ENCODE measurements at regions of chr3 and their contacts with region 1.

Region 1: DNA sequence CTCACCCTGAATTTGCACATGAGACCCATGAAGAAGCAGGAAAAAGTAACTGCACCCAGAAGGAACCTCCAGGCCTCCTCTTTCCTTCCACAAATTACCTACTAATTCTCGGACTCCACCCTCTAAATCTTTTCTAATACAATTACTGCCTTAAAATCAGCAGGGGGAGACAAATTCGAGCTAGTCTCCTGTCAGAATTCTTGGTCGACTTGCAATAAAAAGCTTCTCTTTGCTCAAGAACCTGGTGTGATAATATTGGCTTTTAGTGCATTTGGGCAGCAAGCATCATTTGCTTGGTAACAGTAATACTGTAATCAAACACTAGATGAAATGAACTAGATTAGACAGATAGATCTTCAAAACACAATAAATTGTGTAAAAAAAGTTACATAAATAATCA is 281.9 kb downstream of the RAP2B start:
- DNase-seq: peak; percentile 5
- ATAC-seq: no peak
- H3K4me3 ChIP-seq: no peak overlapping the region
- H3K27ac ChIP-seq: no peak overlapping the region
- H3K4me1 ChIP-seq: no peaks in the 10 kb centered on the region
- H3K27me3 ChIP-seq: no peaks in the 10 kb centered on the region
- CTCF ChIP-seq: peak; percentile 25
- EP300 ChIP-seq: no peak
- POLR2A ChIP-seq: no peak
- RAD21 ChIP-seq: no peak

Region 2: GRCh38 chr3:153026026-153026425 is 417.9 kb before region 1 on chr3:
- CTCF ChIA-PET with region 1: interaction called, 4 read pairs
- POLR2A ChIA-PET with region 1: no interaction called
- in situ Hi-C with region 1: loop called (anchors 25 kb)
- intact Hi-C with region 1: loop called (anchors 5 kb)
- DNase-seq: peak; percentile 23
- ATAC-seq: no peak
- H3K4me3 ChIP-seq: no peak overlapping the region
- H3K27ac ChIP-seq: no peak overlapping the region
- H3K4me1 ChIP-seq: no peaks in the 10 kb centered on the region
- H3K27me3 ChIP-seq: peaks cover 0 to 6% of the 10 kb centered on the region in 2 experiments; a peak in 2 of 5 replicates
- CTCF ChIP-seq: peak; percentile 51
- EP300 ChIP-seq: no peak
- POLR2A ChIP-seq: no peak
- RAD21 ChIP-seq: no peak

Region 3: DNA sequence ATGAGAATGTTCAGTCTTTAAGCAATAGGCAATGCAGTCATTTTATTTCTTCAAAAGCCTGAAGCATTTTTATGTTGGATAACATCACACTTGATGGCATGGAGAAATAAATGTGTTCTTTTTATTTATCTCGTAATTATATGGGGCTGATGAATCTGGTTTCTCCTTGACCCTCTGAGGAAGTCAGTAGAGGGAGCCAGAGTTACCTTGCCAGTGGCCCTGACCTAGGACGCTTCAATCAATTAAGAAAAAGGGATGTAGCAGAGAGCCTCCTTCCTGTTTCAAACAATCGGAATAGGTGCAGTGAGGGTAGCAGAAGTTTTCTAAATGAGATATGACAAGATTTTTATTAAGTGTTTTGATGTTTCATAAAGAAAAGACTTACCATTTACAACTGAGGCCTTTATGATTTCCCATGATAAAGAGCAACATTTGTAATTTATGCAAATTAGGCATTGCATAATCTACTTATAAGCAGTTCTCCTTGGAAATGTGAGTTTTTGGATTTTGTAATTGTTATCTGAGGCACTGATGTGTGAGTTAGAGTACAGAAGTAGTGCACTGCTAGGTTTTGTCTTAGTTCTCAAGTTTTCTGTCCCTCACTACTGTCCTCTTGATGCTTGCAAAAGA is 152.8 kb before region 1 on chr3:
- CTCF ChIA-PET with region 1: no interaction called
- POLR2A ChIA-PET with region 1: no interaction called
- in situ Hi-C with region 1: no loop called
- intact Hi-C with region 1: loop called (anchors 5 kb)
- DNase-seq: peak; percentile 12
- ATAC-seq: peak; percentile 65; the same call in 2 of the 3 replicates
- H3K4me3 ChIP-seq: no peak overlapping the region
- H3K27ac ChIP-seq: no peak overlapping the region
- H3K4me1 ChIP-seq: no peaks in the 10 kb centered on the region
- H3K27me3 ChIP-seq: no peaks in the 10 kb centered on the region
- CTCF ChIP-seq: peak; percentile 42; the same call in 1 of the 2 replicates
- EP300 ChIP-seq: no peak
- POLR2A ChIP-seq: no peak
- RAD21 ChIP-seq: no peak

Region 4: DNA sequence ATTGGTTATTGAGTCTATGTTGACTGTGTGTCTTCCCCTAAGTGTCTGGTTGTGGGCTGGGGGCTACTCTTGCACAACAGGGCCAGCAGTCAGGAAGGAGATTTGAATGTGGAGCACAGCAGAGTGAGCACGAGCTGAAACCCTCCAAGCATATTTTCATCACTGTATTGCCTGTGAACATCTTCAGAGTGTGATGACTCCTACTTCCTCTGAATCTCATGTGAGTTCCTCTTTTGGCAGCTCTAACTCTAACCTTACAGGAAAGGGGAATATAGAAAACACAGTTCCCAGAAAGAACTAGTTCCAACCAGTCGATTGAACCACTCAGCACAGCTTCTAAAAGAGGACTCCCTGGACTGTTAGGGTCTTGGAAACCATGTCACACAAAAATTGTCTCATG is 70.4 kb before region 1 on chr3:
- CTCF ChIA-PET with region 1: no interaction called
- POLR2A ChIA-PET with region 1: no interaction called
- in situ Hi-C with region 1: no loop called
- intact Hi-C with region 1: no loop called
- DNase-seq: no peak
- ATAC-seq: no peak
- H3K4me3 ChIP-seq: no peak overlapping the region
- H3K27ac ChIP-seq: no peak overlapping the region
- H3K4me1 ChIP-seq: no peaks in the 10 kb centered on the region
- H3K27me3 ChIP-seq: no peaks in the 10 kb centered on the region
- CTCF ChIP-seq: no peak
- EP300 ChIP-seq: no peak
- POLR2A ChIP-seq: no peak
- RAD21 ChIP-seq: no peak

Region 5: GRCh38 chr3:153595186-153595815 is 151.3 kb after region 1 on chr3:
- CTCF ChIA-PET with region 1: no interaction called
- POLR2A ChIA-PET with region 1: no interaction called
- in situ Hi-C with region 1: no loop called
- intact Hi-C with region 1: loop called (anchors 5 kb)
- DNase-seq: peak; percentile 18
- ATAC-seq: peak; percentile 77
- H3K4me3 ChIP-seq: no peak overlapping the region
- H3K27ac ChIP-seq: no peak overlapping the region
- H3K4me1 ChIP-seq: peaks cover 16% of the 10 kb centered on the region
- H3K27me3 ChIP-seq: no peaks in the 10 kb centered on the region
- CTCF ChIP-seq: peak; percentile 65
- EP300 ChIP-seq: no peak
- POLR2A ChIP-seq: no peak
- RAD21 ChIP-seq: peak; percentile 33; the same call in 1 of the 2 replicates

Region 6: DNA sequence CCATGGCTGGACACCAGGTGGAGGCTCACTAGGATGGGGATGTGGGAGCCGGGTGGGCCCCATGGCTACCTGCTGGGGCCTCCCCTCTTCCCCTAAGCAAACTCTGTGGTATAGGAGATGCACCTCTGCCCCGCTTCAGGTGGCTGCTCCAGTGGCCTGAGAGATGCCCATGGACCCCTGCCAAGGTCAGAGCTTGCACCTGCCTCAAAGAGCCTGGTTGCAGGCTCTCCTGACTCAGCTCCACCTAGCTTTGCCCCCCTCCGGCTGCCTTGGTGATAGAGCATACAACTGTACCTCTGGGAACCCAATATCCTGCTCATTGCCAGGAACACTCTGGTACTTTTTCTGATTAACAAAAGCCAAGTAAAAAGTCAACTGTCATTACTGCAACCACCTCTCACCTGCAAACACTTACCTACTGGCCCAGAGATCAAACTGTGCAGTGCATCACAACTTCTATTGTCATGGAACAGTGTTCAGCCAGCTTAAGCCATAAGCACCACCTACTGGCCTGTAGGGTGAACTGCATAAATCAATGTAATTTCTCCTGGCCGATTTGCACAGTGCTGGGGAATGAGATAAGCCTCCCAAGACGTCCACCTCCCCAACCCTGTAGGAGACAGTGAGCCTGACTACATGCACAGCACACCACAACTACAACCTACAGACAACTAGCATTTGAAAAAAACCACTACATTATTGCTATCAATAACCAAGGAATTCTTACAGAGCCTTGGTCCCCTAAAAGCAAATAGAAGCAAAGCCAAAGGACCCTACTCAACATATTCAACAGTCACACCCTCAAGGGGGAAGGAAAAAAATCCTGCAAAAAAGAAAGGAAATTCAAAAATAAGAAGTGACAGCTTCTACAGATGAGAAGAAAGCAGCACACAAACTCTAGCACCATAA is 324.9 kb after region 1 on chr3:
- CTCF ChIA-PET with region 1: interaction called, 3 read pairs
- POLR2A ChIA-PET with region 1: no interaction called
- in situ Hi-C with region 1: no loop called
- intact Hi-C with region 1: loop called (anchors 5 kb)
- DNase-seq: peak; percentile 30
- ATAC-seq: peak; percentile 98
- H3K4me3 ChIP-seq: no peak overlapping the region
- H3K27ac ChIP-seq: no peak overlapping the region
- H3K4me1 ChIP-seq: no peaks in the 10 kb centered on the region
- H3K27me3 ChIP-seq: no peaks in the 10 kb centered on the region
- CTCF ChIP-seq: peak; percentile 83
- EP300 ChIP-seq: no peak
- POLR2A ChIP-seq: no peak
- RAD21 ChIP-seq: peak; percentile 48